ENCODE measurements at regions of chr3 and their contacts with region 1.

Region 1: GRCh38 chr3:113696658-113697499 is 437 bp upstream of the USF3 start:
- DNase-seq: peak; percentile 97 to 100 (median 99)
- H3K4me3 ChIP-seq: peak overlapping the region; percentile 61 to 99 (median 88)
- H3K27ac ChIP-seq: peak overlapping the region; percentile 49 to 100 (median 97)
- H3K27me3 ChIP-seq: no peaks in the 10 kb centered on the region
- CTCF ChIP-seq: peak in 43 of 56 donors; percentile 4 to 59 (median 38)

Region 2: DNA sequence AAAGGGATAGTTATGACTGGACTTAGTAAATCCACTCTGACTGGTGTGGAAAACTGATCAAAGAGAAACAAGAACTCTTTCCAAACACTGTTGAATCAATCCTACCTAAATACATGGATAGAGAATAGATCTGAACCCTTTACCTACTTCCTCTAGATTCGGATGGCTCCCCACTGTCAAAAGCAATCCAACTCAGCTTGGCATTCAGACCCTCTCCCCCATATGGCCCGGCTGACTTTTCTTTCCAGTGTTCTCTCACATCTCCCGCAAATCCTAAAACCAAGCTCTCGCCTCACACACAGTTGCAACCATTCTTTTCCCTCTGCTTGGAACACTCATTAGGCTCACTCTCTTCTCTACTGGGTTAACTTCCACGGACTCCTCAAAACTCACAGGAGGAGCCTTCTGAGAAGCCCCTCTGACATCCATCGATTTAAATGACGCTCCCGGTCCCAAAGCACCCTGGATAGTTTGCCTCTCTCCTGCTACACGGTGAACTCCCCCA is 182.6 kb before region 1 on chr3:
- intact Hi-C with region 1: loop called in 1 of 2 experiments (anchors 2 kb)
- DNase-seq: no peak
- H3K4me3 ChIP-seq: peak overlapping the region; percentile 66 to 99 (median 89)
- H3K27ac ChIP-seq: peak overlapping the region in 52 of 59 donors; percentile 52 to 93 (median 84)
- H3K27me3 ChIP-seq: no peaks in the 10 kb centered on the region
- CTCF ChIP-seq: no peak

Region 3: DNA sequence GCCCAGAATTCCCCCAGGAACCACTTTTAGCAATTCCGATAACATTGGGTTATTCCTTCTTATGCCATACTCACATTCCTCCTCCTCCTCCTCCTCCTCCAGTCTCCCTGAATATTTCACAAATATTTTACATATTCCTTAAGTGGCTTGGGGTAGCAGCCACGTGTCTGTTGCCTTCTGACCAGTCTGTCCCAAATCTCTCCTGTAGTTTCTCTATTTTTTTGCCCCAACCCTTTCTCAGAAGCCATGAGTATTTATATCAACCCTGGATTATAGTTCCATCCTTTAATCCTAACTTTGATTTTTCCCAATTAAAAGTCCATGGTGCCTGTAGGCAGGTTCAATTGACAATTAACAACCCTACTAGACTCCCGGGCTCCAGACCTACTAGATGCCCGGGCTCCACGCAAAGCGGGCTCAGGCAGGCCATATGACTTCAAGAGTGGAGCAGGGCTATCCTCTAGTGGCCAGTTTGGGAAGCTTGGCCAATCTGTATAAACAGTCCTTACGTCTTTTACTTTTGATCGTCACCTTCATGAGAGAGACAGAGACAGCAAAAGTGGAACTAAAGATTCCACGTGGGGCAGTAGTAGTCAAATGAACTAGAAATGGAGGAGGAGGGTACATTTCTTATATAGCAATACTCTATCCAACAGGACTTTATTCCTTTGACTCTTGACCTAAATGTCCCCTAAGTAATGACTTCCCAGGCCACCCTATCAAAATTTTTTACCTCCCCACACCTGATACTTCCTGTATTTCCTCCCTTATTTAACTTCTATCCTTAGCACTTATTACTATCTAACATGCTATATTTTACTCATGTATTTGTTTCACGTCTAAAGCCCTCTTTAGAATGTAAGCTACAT is 70.1 kb before region 1 on chr3:
- intact Hi-C with region 1: no loop called
- DNase-seq: peak in 9 of 10 donors; percentile 24 to 79 (median 63)
- H3K4me3 ChIP-seq: peak overlapping the region in 31 of 59 donors; percentile 0 to 42 (median 20)
- H3K27ac ChIP-seq: peak overlapping the region in 10 of 59 donors; percentile 5 to 60 (median 26)
- H3K27me3 ChIP-seq: no peaks in the 10 kb centered on the region
- CTCF ChIP-seq: peak; percentile 54 to 90 (median 81)

Region 4: GRCh38 chr3:113754494-113755159 is 57.7 kb after region 1 on chr3:
- intact Hi-C with region 1: no loop called
- DNase-seq: no peak
- H3K4me3 ChIP-seq: no peak overlapping the region
- H3K27ac ChIP-seq: no peak overlapping the region
- H3K27me3 ChIP-seq: no peaks in the 10 kb centered on the region
- CTCF ChIP-seq: no peak

Region 5: GRCh38 chr3:114056130-114057010 is 359.5 kb after region 1 on chr3 and contains the starts of genes CCDC191 and QTRT2:
- intact Hi-C with region 1: loop called in 1 of 2 experiments (anchors 2 kb)
- DNase-seq: peak; percentile 98 to 100 (median 99)
- H3K4me3 ChIP-seq: peak within 1 kb of the TSS; percentile 60 to 100 (median 88)
- H3K27ac ChIP-seq: peak within 1 kb of the TSS in 49 of 59 donors; percentile 23 to 83 (median 64)
- H3K27me3 ChIP-seq: no peaks in the 10 kb centered on the region
- CTCF ChIP-seq: peak in 23 of 56 donors; percentile 3 to 50 (median 26)
- total RNA-seq, gene CCDC191: 5.7 to 20.1 (median 11.1) TPM
- total RNA-seq, gene QTRT2: 7.6 to 24.3 (median 14.9) TPM

Region 6: GRCh38 chr3:114179575-114179974 is 482.7 kb after region 1 on chr3:
- intact Hi-C with region 1: no loop called
- DNase-seq: peak in 4 of 10 donors; percentile 4 to 30 (median 8)
- H3K4me3 ChIP-seq: no peak overlapping the region
- H3K27ac ChIP-seq: no peak overlapping the region
- H3K27me3 ChIP-seq: peaks cover 0 to 8% (median 0%) of the 10 kb centered on the region in 45 donors
- CTCF ChIP-seq: peak in 43 of 56 donors; percentile 7 to 52 (median 28)